Heart right ventricle (tissue), 16 donors: ENCODE measurements at regions of chr20 and their contacts with region 1.

Region 1: DNA sequence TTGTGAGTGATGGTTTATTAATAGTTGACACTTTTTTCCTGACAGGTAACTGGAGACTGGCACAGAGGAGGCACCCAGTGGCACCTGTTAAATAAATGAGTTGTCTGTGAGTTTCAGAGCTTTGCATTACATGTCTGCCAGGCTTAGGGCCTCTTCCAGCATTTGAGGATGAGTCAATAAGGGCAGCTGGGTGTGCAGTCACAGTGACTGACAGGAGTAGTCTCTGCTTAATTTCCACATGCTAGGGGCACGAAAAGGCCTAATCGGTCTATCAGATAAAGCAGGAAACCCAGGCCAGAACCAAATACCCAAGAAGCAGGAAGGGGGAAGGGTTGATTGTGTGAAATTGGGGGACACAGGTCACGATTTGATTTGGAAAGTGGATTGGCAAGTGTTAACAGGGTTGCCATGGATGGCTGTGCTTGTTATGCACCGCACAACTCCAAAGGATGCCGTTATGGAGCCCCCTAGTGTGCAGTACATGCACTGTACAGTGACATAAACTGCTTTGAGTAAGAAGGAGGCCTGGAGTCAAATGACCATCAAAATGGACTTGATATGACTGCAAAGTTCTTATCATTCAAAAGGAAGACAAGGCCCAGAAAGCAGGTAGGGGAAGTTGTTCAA is 111.9 kb upstream of the GGTLC1 start:
- DNase-seq: peak in 1 of 2 donors; percentile 30
- ATAC-seq: peak; percentile 67 to 90 (median 84)
- H3K4me3 ChIP-seq: no peak overlapping the region
- H3K27ac ChIP-seq: no peak overlapping the region
- H3K4me1 ChIP-seq: no peaks in the 10 kb centered on the region
- H3K27me3 ChIP-seq: peaks cover 0 to 58% (median 37%) of the 10 kb centered on the region in 7 donors
- CTCF ChIP-seq: peak; percentile 50 to 80 (median 73)

Region 2: GRCh38 chr20:23937303-23938117 is 163.0 kb before region 1 on chr20:
- intact Hi-C with region 1: loop called in 7 of 10 experiments (anchors 2 to 10 kb)
- DNase-seq: peak; percentile 20 to 45
- ATAC-seq: peak; percentile 88 to 97 (median 91)
- H3K4me3 ChIP-seq: no peak overlapping the region
- H3K27ac ChIP-seq: no peak overlapping the region
- H3K4me1 ChIP-seq: no peaks in the 10 kb centered on the region
- H3K27me3 ChIP-seq: peaks cover 0 to 20% (median 0%) of the 10 kb centered on the region in 7 donors
- CTCF ChIP-seq: peak; percentile 60 to 84 (median 78)

Region 3: GRCh38 chr20:24001712-24002405 is 98.6 kb before region 1 on chr20:
- intact Hi-C with region 1: loop called in 2 of 10 experiments (anchors 5 to 10 kb)
- DNase-seq: no peak
- ATAC-seq: no peak
- H3K4me3 ChIP-seq: no peak overlapping the region
- H3K27ac ChIP-seq: no peak overlapping the region
- H3K4me1 ChIP-seq: no peaks in the 10 kb centered on the region
- H3K27me3 ChIP-seq: peaks cover 3 to 66% (median 21%) of the 10 kb centered on the region in 7 donors
- CTCF ChIP-seq: no peak

Region 4: DNA sequence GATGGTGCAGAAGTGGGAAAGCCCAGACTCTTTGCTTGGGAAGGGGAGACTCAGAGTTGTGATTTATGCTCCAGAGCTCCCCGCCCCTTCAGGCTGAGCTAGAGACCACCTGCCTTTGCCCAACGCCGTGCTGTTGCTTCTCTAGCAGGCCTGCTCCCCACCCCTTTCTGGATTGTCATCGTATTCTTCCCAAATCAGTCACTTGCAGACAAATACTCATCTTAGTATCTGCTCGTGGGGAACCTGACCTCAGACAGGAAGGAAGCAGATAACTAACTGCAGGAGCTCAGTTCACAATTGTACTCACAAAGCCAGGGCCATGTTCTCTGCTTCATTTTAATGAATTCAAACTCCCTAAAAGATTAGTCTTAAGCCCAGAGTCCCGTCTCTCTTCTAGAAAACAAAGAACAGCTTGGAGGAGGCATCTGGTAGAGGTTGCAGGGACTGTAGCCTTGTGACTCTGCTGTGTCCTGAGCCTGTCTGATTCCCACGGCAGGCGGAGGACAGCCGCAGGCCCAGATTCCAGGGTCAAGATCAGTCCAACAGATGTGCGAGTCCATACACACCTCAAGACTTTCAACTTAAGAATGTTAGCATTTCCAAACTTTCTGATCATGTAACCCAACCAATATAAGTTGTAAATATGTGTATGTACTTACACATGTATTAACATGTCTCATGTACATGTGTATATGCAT is 54.7 kb before region 1 on chr20:
- intact Hi-C with region 1: loop called in 2 of 10 experiments (anchors 10 kb)
- DNase-seq: no peak
- ATAC-seq: no peak
- H3K4me3 ChIP-seq: no peak overlapping the region
- H3K27ac ChIP-seq: no peak overlapping the region
- H3K4me1 ChIP-seq: no peaks in the 10 kb centered on the region
- H3K27me3 ChIP-seq: peaks cover 0 to 6% (median 0%) of the 10 kb centered on the region in 7 donors
- CTCF ChIP-seq: no peak

Region 5: DNA sequence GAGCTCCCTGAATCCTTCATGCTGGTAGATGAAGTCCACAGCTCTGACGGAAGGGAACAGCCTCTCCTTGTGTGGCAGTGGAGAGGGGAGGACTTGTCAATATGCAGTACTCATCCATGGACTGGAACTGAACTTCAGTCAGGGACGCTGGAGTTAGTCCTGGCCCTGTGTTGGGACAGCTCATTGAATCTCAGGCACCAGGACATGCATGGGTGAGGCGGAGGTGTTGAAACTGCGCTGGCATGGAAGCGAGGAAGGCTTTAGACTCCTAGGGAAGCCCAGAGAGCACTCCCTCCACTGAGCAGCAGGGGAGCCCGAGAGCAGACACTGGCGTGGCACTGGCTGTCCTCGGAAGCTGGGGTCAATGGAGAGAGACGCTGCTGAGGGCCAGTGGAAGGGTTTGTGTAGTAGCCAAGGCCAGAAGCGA is 49.4 kb after region 1 on chr20:
- intact Hi-C with region 1: loop called in 1 of 10 experiments (anchors 10 kb)
- DNase-seq: peak; percentile 12 to 48
- ATAC-seq: peak; percentile 50 to 92 (median 72)
- H3K4me3 ChIP-seq: no peak overlapping the region
- H3K27ac ChIP-seq: no peak overlapping the region
- H3K4me1 ChIP-seq: peaks cover 0 to 7% (median 0%) of the 10 kb centered on the region in 9 donors
- H3K27me3 ChIP-seq: no peaks in the 10 kb centered on the region
- CTCF ChIP-seq: peak in 8 of 9 donors; percentile 19 to 53 (median 48)

Region 6: GRCh38 chr20:24160563-24161375 is 60.3 kb after region 1 on chr20:
- intact Hi-C with region 1: no loop called
- DNase-seq: peak; percentile 22 to 38
- ATAC-seq: peak in 5 of 8 donors; percentile 53 to 76 (median 67)
- H3K4me3 ChIP-seq: no peak overlapping the region
- H3K27ac ChIP-seq: no peak overlapping the region
- H3K4me1 ChIP-seq: no peaks in the 10 kb centered on the region
- H3K27me3 ChIP-seq: peaks cover 0 to 6% (median 0%) of the 10 kb centered on the region in 7 donors
- CTCF ChIP-seq: peak; percentile 40 to 78 (median 72)